GM18951 (cell line): ENCODE measurements at regions of chr3 and their contacts with region 1.

Region 1: DNA sequence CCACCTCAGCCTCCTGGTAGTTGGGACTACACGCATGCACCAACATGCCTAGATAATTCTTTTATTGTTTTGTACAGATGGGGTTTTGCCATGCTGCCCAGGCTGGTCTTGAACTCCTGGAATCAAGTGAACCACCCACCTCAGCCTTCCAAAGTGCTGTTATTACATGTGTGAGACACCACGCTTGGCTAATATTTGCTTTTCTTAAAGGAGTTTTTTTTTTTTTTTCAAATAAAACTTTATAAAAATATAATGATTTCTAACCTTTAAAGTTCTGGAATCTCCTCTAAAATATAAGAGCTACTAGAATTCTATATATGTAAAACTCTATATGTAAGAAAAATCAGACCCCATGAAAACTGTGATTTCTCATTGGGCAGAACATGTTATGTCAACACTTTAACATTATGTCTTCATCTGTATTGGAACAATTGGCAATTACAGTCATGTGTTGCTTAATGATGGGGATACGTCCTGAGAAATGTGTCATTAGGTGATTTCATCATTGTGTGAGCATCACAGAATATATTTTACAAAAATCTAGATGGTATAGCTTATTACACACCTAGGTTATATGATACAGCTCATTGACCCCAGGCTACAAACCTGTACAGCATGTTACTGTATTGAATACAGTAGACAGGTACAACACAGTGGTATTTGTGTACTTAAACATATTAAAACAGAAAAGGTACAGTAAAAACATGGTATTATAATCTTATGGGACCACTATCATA is 377.0 kb downstream of the PLCL2 start:
- POLR2A ChIP-seq: no peak

Region 2: DNA sequence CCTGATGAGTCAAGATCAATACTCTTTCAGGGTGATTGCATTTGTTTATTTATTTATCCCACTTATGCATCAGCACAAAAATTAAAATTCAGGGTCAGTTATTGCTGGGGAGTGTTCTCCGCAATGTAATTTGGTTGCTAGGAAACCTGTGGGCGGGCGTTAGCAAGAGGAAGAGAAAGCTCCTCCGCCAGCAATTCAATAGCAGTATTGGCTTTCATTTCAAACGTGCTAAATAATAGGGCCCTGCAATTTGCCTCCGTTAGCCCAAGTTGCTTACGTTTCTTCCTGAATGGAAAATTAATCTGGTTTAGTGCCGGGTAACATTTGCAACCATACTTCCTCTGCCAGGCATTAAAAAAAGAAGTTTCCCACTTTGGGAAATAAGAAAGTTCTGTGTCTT is 412.6 kb before region 1 on chr3:
- in situ Hi-C with region 1: no loop called
- POLR2A ChIP-seq: no peak

Region 3: GRCh38 chr3:17412950-17413530 is 151.2 kb after region 1 on chr3:
- in situ Hi-C with region 1: loop called (anchors 5 kb)
- POLR2A ChIP-seq: no peak